Activated naive CD4-positive, alpha-beta T cell treated with anti-CD3 and anti-CD28 coated beads, Interleukin-2, amount 10 ng/mL, durations not matched to agents 7 days and 5 days (primary cell): ENCODE measurements at regions of chr15 and their contacts with region 1.

Region 1: DNA sequence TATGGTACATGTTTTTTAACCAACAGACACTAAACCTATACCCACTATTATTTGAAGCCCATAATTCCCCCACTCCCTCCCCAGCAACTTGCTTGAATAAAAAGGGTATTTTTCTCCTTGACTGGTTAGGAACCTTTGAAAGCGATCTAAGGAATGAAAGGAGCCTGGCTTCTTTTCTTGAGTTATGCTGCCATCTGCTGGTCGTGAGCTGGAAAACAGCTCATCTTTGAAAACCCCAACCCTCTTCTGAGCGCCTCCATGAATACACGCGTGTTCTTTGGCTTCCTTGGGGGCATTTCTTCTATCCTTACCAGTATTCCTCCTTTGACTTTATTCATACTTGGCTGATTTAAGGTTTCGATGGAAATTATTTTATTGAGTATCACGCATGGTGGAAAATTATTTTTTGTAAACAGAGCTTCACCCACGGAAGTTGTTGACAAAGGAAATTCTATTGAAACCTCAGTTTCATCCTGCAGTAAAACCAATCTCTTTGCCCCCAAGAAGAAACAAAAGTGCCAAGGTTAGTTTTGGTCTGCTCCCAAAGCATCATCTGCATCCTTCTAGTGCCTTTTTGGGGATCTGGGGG is 171.6 kb downstream of the SV2B start:
- DNase-seq: peak; percentile 74
- H3K4me3 Mint-ChIP-seq: peak overlapping the region; percentile 19
- H3K27ac Mint-ChIP-seq: no peak overlapping the region
- H3K4me1 Mint-ChIP-seq: peaks cover 13% of the 10 kb centered on the region
- H3K27me3 Mint-ChIP-seq: peaks cover 51% of the 10 kb centered on the region

Region 2: DNA sequence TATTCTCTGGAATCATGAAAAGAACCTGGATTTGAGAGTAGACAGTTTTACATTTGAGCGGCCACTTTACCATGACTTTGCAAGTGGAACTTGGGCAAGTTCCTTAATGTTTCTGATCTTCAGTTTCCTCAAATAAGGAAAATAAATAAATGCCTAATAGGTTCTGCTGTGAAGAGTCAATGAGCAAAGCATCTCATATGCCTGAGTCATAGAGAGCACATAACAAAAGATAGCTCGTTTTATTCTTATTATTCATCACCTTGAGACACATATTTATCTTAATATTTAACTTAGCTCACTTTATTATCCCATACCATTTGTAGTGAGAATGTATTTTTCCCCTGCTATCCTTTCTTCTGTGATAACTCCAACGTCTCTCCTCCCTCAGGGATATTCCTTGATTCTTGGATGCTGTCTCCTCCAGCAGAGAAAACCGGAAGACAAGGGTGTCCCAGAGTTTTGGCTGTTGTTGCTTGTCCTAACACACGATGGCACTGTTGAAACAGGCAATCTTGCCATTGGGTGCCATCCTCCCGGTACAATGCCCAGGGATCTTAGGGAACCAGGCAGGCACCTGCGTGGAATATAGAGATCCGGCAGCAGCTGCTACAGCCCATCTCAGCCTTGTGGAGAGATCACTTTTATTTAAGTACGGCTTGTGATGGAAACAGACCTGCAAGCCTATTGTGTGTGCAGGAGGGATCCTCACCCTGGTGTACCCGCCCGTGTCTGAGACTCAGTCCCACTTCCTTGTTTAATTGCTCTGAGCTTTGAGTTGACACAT is 215.9 kb before region 1 on chr15:
- CTCF ChIA-PET with region 1: interaction called, 53 read pairs
- DNase-seq: peak; percentile 56
- H3K4me3 Mint-ChIP-seq: no peak overlapping the region
- H3K27ac Mint-ChIP-seq: no peak overlapping the region
- H3K4me1 Mint-ChIP-seq: no peaks in the 10 kb centered on the region
- H3K27me3 Mint-ChIP-seq: peaks cover 81% of the 10 kb centered on the region

Region 3: GRCh38 chr15:91249591-91249990 is 22.1 kb before region 1 on chr15:
- CTCF ChIA-PET with region 1: interaction called, 15 read pairs
- DNase-seq: no peak
- H3K4me3 Mint-ChIP-seq: no peak overlapping the region
- H3K27ac Mint-ChIP-seq: no peak overlapping the region
- H3K4me1 Mint-ChIP-seq: peaks cover 4% of the 10 kb centered on the region
- H3K27me3 Mint-ChIP-seq: peaks cover 26% of the 10 kb centered on the region

Region 4: DNA sequence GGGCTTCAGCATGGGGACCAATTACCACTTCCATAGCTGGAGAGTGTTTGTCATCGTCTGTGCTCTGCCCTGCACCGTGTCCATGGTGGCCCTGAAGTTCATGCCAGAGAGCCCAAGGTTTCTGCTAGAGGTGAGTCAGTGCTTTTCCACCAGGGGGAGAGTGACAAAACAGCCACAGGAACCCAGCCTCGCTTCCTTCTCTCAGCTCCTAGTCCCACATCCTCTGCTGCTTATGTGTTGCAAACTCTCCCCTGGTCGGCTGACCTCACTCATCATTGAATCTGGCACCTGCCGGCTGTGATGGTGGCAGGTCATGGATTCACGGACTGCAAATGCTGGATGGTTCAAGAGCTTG is 13.3 kb before region 1 on chr15:
- CTCF ChIA-PET with region 1: interaction called, 33 read pairs
- DNase-seq: peak; percentile 38
- H3K4me3 Mint-ChIP-seq: no peak overlapping the region
- H3K27ac Mint-ChIP-seq: no peak overlapping the region
- H3K4me1 Mint-ChIP-seq: peaks cover 8% of the 10 kb centered on the region
- H3K27me3 Mint-ChIP-seq: peaks cover 20% of the 10 kb centered on the region